ENCODE measurements at regions of chr6 and their contacts with region 1.

Region 1: DNA sequence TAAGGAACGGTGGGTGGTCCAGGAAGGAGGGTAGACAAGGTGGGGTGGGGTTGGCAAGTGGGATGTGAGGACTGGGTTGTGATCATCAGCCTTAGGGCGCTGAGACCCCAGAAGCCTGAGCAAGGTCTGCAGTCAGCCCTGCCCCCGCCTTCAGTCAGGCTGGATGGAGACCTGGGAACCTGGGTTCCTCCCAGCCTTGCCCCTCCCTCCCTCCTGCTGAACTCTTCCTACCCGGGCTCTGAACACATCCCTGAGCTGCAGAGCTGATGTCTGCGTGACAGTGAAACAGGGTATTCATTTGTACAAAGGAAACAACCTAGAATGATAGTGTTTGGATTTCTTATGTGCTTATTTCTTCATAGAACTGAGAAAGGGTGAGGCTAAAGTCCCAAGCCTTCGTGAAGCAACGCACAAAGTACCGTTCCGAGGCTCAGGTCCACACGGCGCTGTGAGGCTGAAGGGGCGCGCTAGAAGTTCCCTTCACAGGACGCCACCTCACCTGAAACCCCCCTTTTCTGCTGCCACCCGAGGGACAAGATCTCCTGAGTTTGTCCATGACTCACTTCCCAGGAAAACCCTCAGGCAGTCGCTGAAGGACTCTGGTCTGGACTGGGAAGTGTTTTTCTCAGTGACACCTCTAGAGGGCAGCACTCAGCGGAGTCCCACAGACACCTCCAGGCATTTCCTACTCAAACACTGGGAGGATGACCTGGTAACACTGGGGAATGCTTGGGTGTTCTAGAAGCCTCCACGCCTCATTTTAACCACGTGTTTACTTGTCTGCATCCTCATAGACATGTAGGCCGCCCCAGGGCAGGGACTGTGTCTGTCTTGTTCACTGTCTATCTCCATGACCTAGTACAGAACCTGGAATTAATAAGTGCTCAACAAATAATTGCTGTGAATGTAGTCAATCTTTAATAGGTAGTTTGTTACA is 1.2 kb downstream of the GSTA5 start:
- DNase-seq: peak; percentile 26
- ATAC-seq: peak; percentile 77
- H3K4me3 Mint-ChIP-seq: no peak overlapping the region
- H3K27ac Mint-ChIP-seq: no peak overlapping the region
- H3K4me1 Mint-ChIP-seq: no peaks in the 10 kb centered on the region
- H3K27me3 Mint-ChIP-seq: peaks cover 29% of the 10 kb centered on the region
- CTCF ChIP-seq: peak; percentile 15

Region 2: GRCh38 chr6:52724406-52725121 is 114.8 kb before region 1 on chr6:
- CTCF ChIA-PET with region 1: no interaction called
- POLR2A ChIA-PET with region 1: no interaction called
- intact Hi-C with region 1: no loop called
- DNase-seq: peak; percentile 26
- ATAC-seq: peak; percentile 97
- H3K4me3 Mint-ChIP-seq: no peak overlapping the region
- H3K27ac Mint-ChIP-seq: no peak overlapping the region
- H3K4me1 Mint-ChIP-seq: peaks cover 7% of the 10 kb centered on the region
- H3K27me3 Mint-ChIP-seq: no peaks in the 10 kb centered on the region
- CTCF ChIP-seq: no peak

Region 3: DNA sequence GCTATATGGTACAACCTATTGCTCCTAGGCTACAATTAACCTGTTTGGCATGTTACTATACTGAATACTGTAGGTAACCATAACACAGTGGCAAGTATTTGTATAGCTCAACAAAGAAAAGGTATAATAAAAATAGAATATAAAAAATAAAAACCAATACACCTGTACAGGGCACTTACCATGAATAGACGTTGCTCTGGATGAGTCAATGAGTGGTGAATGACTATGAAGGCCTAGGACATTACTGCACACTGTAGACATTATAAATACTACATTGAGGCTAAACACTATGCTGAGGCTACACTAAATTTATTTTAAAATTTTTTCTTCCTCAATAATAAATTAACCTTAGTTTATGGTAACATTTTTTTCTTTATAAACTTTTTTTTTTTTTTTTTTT is 490.8 kb after region 1 on chr6:
- CTCF ChIA-PET with region 1: no interaction called
- POLR2A ChIA-PET with region 1: no interaction called
- intact Hi-C with region 1: loop called (anchors 5 kb)
- DNase-seq: no peak
- ATAC-seq: no peak
- H3K4me3 Mint-ChIP-seq: no peak overlapping the region
- H3K27ac Mint-ChIP-seq: no peak overlapping the region
- H3K4me1 Mint-ChIP-seq: peaks cover 83% of the 10 kb centered on the region
- H3K27me3 Mint-ChIP-seq: no peaks in the 10 kb centered on the region
- CTCF ChIP-seq: no peak